Dendritic cell treated with granulocyte-macrophage colony-stimulating factor and Interleukin-4, amounts not matched to agents 40 ng/mL and 50 ng/mL, for 4 days (primary cell): ENCODE measurements at regions of chr4 and their contacts with region 1.

Region 1: GRCh38 chr4:83217721-83218522 is 66.7 kb downstream of the COQ2 start:
- H3K4me3 Mint-ChIP-seq: peak overlapping the region; percentile 33
- H3K27ac Mint-ChIP-seq: peak overlapping the region; percentile 73
- H3K4me1 Mint-ChIP-seq: peaks cover 45% of the 10 kb centered on the region
- H3K27me3 Mint-ChIP-seq: no peaks in the 10 kb centered on the region

Region 2: GRCh38 chr4:83252782-83253405 is 35.0 kb after region 1 on chr4:
- intact Hi-C with region 1: loop called (anchors 5 kb)
- H3K4me3 Mint-ChIP-seq: no peak overlapping the region
- H3K27ac Mint-ChIP-seq: no peak overlapping the region
- H3K4me1 Mint-ChIP-seq: peaks cover 26% of the 10 kb centered on the region
- H3K27me3 Mint-ChIP-seq: no peaks in the 10 kb centered on the region